ENCODE measurements at regions of chr1 and their contacts with region 1.

Region 1: GRCh38 chr1:204363335-204364124 is 3.8 kb upstream of the PLEKHA6 start:
- DNase-seq: peak; percentile 73 to 76
- H3K4me3 ChIP-seq: peak overlapping the region; percentile 28 to 33
- H3K27ac ChIP-seq: peak overlapping the region; percentile 46 to 80
- H3K4me1 ChIP-seq: no peaks in the 10 kb centered on the region
- H3K27me3 ChIP-seq: no peaks in the 10 kb centered on the region
- CTCF ChIP-seq: peak; percentile 96 to 98 (median 96)
- POLR2A ChIP-seq: peak in 1 of 2 donors; percentile 38

Region 2: DNA sequence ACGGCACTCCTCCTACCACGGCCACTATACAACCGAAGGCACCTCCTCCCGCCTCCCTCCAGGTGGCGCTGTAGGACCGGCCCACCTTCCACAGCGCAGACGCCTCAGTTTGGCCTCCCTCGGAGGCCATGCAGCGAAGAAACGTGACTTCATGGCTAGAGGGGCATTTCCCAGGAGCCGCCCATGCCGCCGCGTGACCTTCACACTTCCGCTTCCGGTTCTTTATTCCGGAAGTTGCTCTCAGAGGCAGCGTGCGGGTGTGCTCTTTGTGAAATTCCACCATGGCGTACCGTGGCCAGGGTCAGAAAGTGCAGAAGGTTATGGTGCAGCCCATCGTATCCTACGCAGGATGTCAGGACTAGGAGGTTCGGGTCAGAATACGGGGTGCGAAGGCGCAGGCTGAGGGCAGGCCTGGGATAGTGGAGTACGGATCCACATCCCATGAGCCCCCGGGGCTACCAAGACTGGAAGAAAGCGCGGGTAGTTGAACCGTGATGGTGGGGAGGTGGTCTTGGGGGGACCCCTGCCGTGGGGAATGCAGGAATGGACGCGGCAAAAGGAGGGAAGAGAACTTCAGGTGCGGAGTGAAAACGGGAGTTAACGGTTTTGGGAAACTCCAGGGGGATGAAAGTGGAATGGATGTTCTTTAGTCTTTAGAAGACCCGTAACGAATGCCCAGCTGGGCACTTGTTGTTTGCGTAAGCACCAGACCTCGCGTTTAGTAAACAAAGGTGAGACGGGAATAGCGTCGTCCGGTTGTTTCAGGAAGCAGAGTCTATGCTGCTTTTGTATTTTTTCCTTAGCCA is 501.9 kb before region 1 on chr1 and contains the start of gene SNRPE:
- intact Hi-C with region 1: loop called (anchors 5 kb)
- DNase-seq: peak; percentile 96
- H3K4me3 ChIP-seq: peak within 1 kb of the TSS; percentile 71 to 90
- H3K27ac ChIP-seq: peak within 1 kb of the TSS; percentile 71 to 72
- H3K4me1 ChIP-seq: no peaks in the 10 kb centered on the region
- H3K27me3 ChIP-seq: no peaks in the 10 kb centered on the region
- CTCF ChIP-seq: peak; percentile 91 to 99 (median 98)
- POLR2A ChIP-seq: peak; percentile 26 to 66
- total RNA-seq, gene SNRPE: 32.5 to 105 (median 103) TPM

Region 3: DNA sequence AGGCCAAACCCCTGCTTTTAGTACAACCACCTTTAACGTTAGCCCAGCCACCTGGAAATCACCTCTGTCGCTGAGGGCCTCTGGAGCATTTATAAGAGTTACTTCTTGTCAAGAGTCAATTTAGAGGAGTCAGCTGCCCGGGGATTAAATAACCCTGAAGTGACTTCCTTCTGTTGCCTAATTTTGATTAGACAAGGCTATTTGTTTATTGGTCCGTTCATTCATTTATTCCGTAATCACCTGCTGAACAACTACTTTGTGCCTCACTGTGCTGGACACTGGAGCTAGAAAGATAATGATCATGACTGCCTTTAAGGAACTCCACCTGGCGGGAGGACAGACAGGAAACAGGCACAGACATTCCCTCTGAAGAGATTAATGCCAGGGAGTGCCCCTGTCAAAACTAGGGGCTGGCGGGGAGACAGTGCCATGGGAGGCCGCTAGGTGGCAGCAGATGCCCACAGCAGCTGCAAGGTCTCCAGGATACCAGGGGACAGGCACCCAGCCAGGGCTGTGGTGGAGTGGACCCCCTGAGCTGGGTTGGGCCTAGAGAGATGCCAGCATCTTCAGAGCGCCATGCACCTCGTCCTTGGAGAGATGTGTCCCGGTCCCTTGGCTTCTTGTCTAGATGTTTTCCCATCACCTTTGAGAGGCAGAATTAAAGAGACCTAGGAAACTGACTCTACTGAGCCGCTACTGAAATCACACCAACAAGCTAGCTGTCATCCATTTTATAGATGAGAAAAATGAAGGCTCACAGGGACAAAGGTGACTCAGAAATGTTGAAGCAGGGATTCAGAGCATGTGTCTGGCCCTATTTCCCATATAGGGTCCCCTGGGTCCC is 201.1 kb before region 1 on chr1:
- intact Hi-C with region 1: loop called (anchors 5 kb)
- DNase-seq: peak; percentile 77 to 84
- H3K4me3 ChIP-seq: no peak overlapping the region
- H3K27ac ChIP-seq: no peak overlapping the region
- H3K4me1 ChIP-seq: no peaks in the 10 kb centered on the region
- H3K27me3 ChIP-seq: no peaks in the 10 kb centered on the region
- CTCF ChIP-seq: peak; percentile 97 to 99 (median 98)
- POLR2A ChIP-seq: no peak

Region 4: DNA sequence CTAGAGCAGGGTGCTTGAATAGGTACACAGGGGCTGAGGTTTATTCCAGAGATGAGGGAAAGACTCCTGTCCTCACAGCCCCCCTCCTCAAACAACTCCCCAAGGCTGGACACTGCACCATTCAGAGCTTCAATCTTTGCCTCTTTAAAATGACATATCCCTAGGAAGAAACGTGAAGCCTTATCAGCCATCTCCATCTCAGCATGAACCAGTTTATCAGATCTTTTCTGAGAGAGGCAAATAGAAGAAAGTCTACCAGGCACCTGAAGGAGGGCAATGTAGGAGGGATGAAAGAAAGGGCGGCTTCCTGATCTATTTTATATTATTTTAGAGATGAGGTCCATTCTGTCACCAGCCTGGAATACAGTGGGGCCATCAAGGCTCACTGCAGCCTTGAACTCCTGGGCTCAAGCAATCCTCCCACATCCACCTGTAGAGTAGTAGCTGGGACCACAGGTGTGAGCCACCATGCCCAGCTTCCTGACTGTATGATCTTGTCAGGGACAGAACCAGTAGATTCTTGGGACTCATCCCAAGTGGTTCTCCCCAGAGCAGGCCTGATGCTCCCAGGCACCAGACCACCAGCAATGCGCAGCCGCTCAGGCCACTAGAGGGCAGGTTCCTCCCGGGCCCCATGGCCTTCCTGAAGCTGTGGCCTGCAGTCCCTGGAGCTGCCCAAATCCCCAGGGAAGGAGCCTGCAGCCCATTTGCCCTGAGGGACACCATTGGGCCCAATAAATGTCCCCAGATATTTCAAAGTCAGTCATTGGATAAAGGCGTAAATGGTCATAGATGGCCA is 105.4 kb before region 1 on chr1:
- intact Hi-C with region 1: loop called (anchors 5 kb)
- DNase-seq: peak; percentile 42 to 60
- H3K4me3 ChIP-seq: no peak overlapping the region
- H3K27ac ChIP-seq: no peak overlapping the region
- H3K4me1 ChIP-seq: no peaks in the 10 kb centered on the region
- H3K27me3 ChIP-seq: no peaks in the 10 kb centered on the region
- CTCF ChIP-seq: peak; percentile 54 to 69 (median 64)
- POLR2A ChIP-seq: no peak